ENCODE measurements at regions of chr11 and their contacts with region 1.

Region 1: DNA sequence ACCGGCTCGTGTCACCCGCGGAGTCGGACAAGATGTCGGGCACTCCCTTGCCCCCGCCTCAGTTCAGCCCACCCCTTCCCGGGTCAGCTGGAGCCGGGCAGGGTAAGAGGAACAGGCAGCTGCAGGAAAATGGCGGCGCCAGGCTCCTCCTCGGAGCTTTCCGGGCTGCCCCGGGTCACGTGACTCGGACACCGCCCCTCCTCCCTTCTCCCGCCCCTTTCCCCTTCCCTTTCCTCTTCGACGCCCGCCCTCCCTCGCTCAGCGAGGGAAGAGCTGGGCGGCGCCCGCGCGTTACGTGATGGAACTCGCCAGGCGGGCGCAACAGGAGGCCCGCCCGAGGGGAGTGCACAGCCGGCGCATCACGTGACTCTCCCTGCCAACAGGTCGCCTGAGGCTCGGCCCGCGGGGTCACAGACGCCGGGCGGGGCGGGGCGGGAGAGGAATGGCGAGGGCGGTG is at the start of gene PICALM:
- DNase-seq: peak; percentile 88 to 96 (median 95)
- ATAC-seq: peak; percentile 93
- H3K4me3 ChIP-seq: peak within 1 kb of the TSS; percentile 82
- H3K4me3 Mint-ChIP-seq: peak within 1 kb of the TSS; percentile 95 to 100 (median 98)
- H3K27ac ChIP-seq: peak within 1 kb of the TSS; percentile 89
- H3K27ac Mint-ChIP-seq: peak within 1 kb of the TSS; percentile 92 to 97 (median 96)
- H3K4me1 ChIP-seq: peaks cover 14 to 16% of the 10 kb centered on the region in 2 donors
- H3K4me1 Mint-ChIP-seq: peaks cover 33 to 39% (median 36%) of the 10 kb centered on the region in 7 donors
- H3K27me3 ChIP-seq: no peaks in the 10 kb centered on the region
- H3K27me3 Mint-ChIP-seq: no peaks in the 10 kb centered on the region
- total RNA-seq, gene PICALM: 96.7 to 230 (median 102) TPM

Region 2: DNA sequence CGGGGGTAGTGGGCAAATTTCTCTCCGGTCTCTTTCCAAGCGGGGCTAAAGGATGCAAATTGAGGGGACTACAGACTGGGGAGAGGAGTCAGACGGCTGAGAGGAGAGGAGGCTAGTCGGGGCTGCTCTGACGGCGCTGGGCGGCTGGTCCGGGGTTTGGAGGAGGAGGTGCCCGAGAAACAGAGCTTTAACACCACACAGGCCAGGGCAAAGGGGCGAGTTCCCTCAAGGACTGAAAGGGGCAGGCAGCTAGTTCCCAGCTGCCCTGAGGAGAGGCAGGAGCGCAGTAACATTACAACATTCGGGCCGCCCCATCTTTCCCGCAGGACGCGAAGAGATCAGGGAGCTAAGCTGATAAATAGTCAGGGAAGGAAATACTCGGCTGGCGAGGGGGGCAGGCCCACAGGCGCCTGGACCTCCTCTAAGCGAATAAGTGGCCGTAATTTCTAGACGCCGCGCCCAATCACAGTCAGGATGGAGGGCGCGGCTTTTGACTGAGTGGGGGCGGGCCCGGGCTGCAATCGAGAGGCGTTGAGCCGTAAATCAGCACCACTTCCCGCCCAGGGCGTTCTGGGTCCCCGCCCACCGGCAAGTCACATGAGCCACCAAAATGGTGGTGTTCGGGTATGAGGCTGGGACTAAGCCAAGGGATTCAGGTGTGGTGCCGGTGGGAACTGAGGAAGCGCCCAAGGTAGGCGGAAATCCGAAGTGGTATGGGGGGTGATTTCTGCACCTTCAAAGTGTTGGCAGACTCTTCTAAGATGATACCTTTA is 440.8 kb before region 1 on chr11 and contains the start of gene TMEM126B:
- CTCF ChIA-PET with region 1: no interaction called
- POLR2A ChIA-PET with region 1: interaction called, 8 read pairs
- intact Hi-C with region 1: loop called (anchors 1 kb)
- DNase-seq: peak; percentile 85 to 95 (median 94)
- ATAC-seq: peak; percentile 99
- H3K4me3 ChIP-seq: peak within 1 kb of the TSS; percentile 98
- H3K4me3 Mint-ChIP-seq: peak within 1 kb of the TSS; percentile 84 to 98 (median 94)
- H3K27ac ChIP-seq: peak within 1 kb of the TSS; percentile 85
- H3K27ac Mint-ChIP-seq: peak within 1 kb of the TSS; percentile 89 to 97 (median 94)
- H3K4me1 ChIP-seq: peaks cover 13 to 22% of the 10 kb centered on the region in 2 donors
- H3K4me1 Mint-ChIP-seq: peaks cover 17 to 67% (median 48%) of the 10 kb centered on the region in 7 donors
- H3K27me3 ChIP-seq: no peaks in the 10 kb centered on the region
- H3K27me3 Mint-ChIP-seq: peaks cover 0 to 9% (median 0%) of the 10 kb centered on the region in 5 donors
- total RNA-seq, gene TMEM126B: 22.1 to 50.4 (median 36.4) TPM

Region 3: GRCh38 chr11:85664615-85665481 is 404.1 kb before region 1 on chr11 and contains the start of gene CREBZF:
- CTCF ChIA-PET with region 1: no interaction called
- POLR2A ChIA-PET with region 1: interaction called, 3 read pairs
- intact Hi-C with region 1: loop called (anchors 1 kb)
- DNase-seq: peak; percentile 83 to 96 (median 92)
- ATAC-seq: peak; percentile 85
- H3K4me3 ChIP-seq: peak within 1 kb of the TSS; percentile 97
- H3K4me3 Mint-ChIP-seq: peak within 1 kb of the TSS; percentile 93 to 100 (median 99)
- H3K27ac ChIP-seq: peak within 1 kb of the TSS; percentile 99
- H3K27ac Mint-ChIP-seq: peak within 1 kb of the TSS; percentile 96 to 100 (median 99)
- H3K4me1 ChIP-seq: peaks cover 19 to 31% of the 10 kb centered on the region in 2 donors
- H3K4me1 Mint-ChIP-seq: peaks cover 29 to 55% (median 39%) of the 10 kb centered on the region in 7 donors
- H3K27me3 ChIP-seq: no peaks in the 10 kb centered on the region
- H3K27me3 Mint-ChIP-seq: peaks cover 0 to 5% (median 0%) of the 10 kb centered on the region in 5 donors
- total RNA-seq, gene CREBZF: 56.9 to 114 (median 59.7) TPM

Region 4: DNA sequence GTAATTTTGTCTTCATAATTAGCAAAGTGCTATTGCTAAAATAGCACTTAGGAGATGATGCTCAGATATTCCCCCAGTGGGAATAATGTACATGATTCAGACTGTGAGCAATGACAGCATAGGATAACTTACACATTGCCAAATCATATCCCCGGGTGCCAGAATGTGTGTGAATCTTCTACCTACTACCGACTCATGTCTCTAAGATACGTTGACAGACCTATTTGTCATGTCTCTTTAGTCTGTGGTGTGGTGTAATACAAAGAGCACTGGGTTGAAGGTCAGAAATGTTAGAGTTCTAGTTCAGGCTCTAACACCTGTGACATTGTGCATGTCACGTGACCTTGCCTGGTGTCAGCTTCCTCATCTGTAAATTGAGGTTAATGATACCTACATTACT is 30.9 kb after region 1 on chr11:
- CTCF ChIA-PET with region 1: no interaction called
- POLR2A ChIA-PET with region 1: no interaction called
- intact Hi-C with region 1: no loop called
- DNase-seq: no peak
- ATAC-seq: no peak
- H3K4me3 ChIP-seq: no peak overlapping the region
- H3K4me3 Mint-ChIP-seq: no peak overlapping the region
- H3K27ac ChIP-seq: no peak overlapping the region
- H3K27ac Mint-ChIP-seq: no peak overlapping the region
- H3K4me1 ChIP-seq: no peaks in the 10 kb centered on the region
- H3K4me1 Mint-ChIP-seq: no peaks in the 10 kb centered on the region
- H3K27me3 ChIP-seq: no peaks in the 10 kb centered on the region
- H3K27me3 Mint-ChIP-seq: peaks cover 3 to 13% (median 9%) of the 10 kb centered on the region in 5 donors

Region 5: GRCh38 chr11:86116386-86116726 is 47.4 kb after region 1 on chr11:
- CTCF ChIA-PET with region 1: no interaction called
- POLR2A ChIA-PET with region 1: no interaction called
- intact Hi-C with region 1: loop called in 1 of 2 experiments (anchors 5 kb)
- DNase-seq: no peak
- ATAC-seq: peak; percentile 60
- H3K4me3 ChIP-seq: no peak overlapping the region
- H3K4me3 Mint-ChIP-seq: peak overlapping the region in 1 of 10 donors; percentile 41
- H3K27ac ChIP-seq: no peak overlapping the region
- H3K27ac Mint-ChIP-seq: peak overlapping the region in 3 of 9 donors; percentile 9 to 82 (median 58)
- H3K4me1 ChIP-seq: peaks cover 0 to 15% of the 10 kb centered on the region in 2 donors
- H3K4me1 Mint-ChIP-seq: peaks cover 0 to 21% (median 0%) of the 10 kb centered on the region in 7 donors
- H3K27me3 ChIP-seq: no peaks in the 10 kb centered on the region
- H3K27me3 Mint-ChIP-seq: peaks cover 0 to 6% (median 0%) of the 10 kb centered on the region in 5 donors

Region 6: DNA sequence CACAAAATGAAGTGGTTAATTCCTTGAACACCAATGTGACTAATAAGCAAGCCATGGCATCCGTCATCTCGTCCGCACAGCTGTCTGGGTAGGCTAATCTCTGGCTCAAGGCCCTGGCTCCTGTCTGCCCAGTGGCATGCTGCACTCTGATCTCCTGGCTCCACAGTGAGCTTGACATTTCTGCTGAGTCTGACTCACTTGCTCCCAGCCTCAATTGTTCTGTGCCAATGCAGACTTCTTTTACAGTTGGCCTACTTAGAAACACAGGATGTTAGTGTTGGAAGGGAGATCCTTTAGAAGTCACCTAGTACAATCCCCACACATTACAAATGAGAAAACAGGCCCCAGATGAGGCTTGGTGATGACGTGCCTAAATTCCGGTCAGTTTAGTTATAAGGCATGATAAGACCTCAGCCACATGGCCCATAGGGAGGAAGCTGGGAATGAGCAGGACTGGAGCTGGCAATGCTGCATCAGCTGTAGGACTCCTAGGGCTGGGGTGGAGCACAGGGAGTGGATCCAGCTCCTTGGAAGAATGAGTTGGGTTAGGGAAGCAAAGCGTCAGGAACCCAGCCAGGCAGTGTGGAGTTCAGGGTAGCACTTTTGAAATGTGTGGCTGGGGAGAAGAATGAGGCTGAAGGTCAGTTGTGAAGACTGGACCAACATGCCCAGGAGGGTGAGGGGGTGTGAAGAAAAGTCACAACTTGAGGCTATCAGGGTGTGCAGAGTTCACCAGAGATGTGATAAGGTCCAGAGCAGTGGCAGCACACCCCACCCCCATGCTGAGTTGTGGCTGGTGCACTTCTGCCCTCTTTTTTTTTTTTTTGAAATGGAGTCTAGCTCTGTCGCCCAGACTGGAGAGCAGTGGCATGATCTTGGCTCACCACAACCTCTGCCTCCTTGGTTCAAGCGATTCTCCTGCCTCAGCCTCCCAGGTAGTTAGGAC is 105.4 kb after region 1 on chr11:
- CTCF ChIA-PET with region 1: interaction called, 8 read pairs
- POLR2A ChIA-PET with region 1: no interaction called
- intact Hi-C with region 1: loop called in 1 of 2 experiments (anchors 1 kb)
- DNase-seq: no peak
- ATAC-seq: peak; percentile 56
- H3K4me3 ChIP-seq: no peak overlapping the region
- H3K4me3 Mint-ChIP-seq: no peak overlapping the region
- H3K27ac ChIP-seq: no peak overlapping the region
- H3K27ac Mint-ChIP-seq: no peak overlapping the region
- H3K4me1 ChIP-seq: no peaks in the 10 kb centered on the region
- H3K4me1 Mint-ChIP-seq: peaks cover 0 to 25% (median 0%) of the 10 kb centered on the region in 7 donors
- H3K27me3 ChIP-seq: no peaks in the 10 kb centered on the region
- H3K27me3 Mint-ChIP-seq: peaks cover 0 to 13% (median 7%) of the 10 kb centered on the region in 5 donors

Region 7: DNA sequence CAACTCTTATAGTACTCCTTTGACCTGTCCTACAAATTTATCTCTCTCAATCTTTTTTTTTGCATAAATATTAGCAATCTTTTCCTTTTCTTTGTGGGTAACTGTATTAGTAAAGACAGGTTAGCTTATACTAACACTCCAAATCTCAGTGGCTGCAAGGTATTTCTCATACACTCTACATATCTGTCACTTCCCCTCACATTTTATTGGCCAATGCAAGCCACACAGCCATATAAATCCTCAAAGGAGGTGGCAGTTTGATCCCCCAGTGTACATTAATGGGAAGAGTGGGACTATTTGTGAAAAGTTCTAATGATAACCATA is 133.0 kb after region 1 on chr11:
- CTCF ChIA-PET with region 1: interaction called, 4 read pairs
- POLR2A ChIA-PET with region 1: interaction called, 12 read pairs
- intact Hi-C with region 1: loop called (anchors 1 kb)
- DNase-seq: peak in 2 of 9 donors; percentile 7 to 17
- ATAC-seq: peak; percentile 71
- H3K4me3 ChIP-seq: peak overlapping the region; percentile 58
- H3K4me3 Mint-ChIP-seq: no peak overlapping the region
- H3K27ac ChIP-seq: peak overlapping the region; percentile 12
- H3K27ac Mint-ChIP-seq: no peak overlapping the region
- H3K4me1 ChIP-seq: peaks cover 4 to 11% of the 10 kb centered on the region in 2 donors
- H3K4me1 Mint-ChIP-seq: peaks cover 0 to 8% (median 0%) of the 10 kb centered on the region in 7 donors
- H3K27me3 ChIP-seq: no peaks in the 10 kb centered on the region
- H3K27me3 Mint-ChIP-seq: no peaks in the 10 kb centered on the region

Region 8: DNA sequence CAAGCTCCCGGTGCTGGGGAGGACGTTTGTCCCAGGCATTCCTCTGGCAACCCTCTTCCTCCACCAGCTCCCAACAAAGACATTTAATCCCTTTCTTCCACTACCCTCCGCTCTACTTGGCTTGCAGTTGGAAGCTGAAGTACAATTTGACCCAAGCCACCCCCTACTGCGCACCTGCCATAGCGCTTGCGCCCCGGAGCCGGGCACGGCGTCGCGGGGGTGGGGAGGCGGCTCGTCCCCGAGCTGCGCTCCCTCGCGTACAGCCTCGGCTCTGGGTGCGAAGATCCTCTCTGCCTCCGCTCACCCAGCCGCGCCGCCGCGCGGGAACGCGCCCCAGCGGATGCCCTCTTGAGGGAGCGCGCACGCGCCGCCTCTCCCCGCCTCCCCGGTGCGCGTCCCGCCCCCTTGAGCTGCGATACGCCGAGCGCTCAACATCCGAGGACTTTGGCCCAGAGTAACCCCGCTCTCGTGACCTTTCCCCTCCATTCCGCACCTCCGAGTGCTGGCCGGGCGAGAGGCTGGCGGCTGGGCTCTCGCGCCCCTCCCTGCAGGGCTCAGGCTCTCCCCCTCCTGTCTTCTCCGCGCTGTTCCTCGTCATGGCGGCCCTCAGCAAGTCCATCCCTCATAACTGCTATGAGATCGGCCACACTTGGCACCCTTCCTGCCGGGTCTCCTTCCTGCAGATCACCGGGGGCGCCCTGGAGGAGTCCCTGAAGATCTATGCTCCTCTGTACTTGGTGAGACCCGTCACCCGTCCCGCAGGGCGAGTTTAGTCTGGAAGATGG is 968.7 kb after region 1 on chr11 and contains the start of gene TMEM135:
- CTCF ChIA-PET with region 1: no interaction called
- POLR2A ChIA-PET with region 1: no interaction called
- intact Hi-C with region 1: loop called in 1 of 2 experiments (anchors 5 kb)
- DNase-seq: peak; percentile 82 to 96 (median 90)
- ATAC-seq: peak; percentile 99
- H3K4me3 ChIP-seq: peak within 1 kb of the TSS; percentile 97
- H3K4me3 Mint-ChIP-seq: peak within 1 kb of the TSS; percentile 92 to 99 (median 97)
- H3K27ac ChIP-seq: peak within 1 kb of the TSS; percentile 69
- H3K27ac Mint-ChIP-seq: peak within 1 kb of the TSS; percentile 77 to 96 (median 93)
- H3K4me1 ChIP-seq: peaks cover 11 to 15% of the 10 kb centered on the region in 2 donors
- H3K4me1 Mint-ChIP-seq: peaks cover 37 to 68% (median 58%) of the 10 kb centered on the region in 7 donors
- H3K27me3 ChIP-seq: no peaks in the 10 kb centered on the region
- H3K27me3 Mint-ChIP-seq: peaks cover 0 to 19% (median 0%) of the 10 kb centered on the region in 5 donors
- total RNA-seq, gene TMEM135: 8.3 to 26.8 (median 12.8) TPM

Measured in naive thymus-derived CD4-positive, alpha-beta T cell (primary cell).